CD4-positive, alpha-beta T cell (primary cell): ENCODE measurements at regions of chr12 and their contacts with region 1.

Region 1: DNA sequence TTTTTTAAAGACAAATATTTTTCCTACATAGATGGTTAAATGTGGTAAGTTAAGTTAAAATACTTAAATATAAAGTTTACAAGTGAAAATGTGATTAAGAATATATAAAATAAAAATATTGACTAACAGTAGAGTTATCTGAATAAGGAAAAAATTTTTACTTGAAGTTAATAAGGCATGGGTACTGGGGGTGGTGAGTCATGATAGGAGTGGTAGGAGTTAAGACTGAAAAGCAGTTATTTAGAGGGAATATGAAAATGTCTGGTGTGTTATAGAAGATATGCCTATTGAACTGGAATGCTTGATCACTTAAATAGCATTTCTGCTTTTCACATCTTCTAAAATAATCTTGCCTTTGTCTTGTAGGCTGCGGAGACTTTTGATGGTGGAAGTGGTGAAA is 68.7 kb downstream of the CCDC91 start:
- DNase-seq: no peak
- ATAC-seq: no peak
- H3K4me3 ChIP-seq: no peak overlapping the region
- H3K4me3 Mint-ChIP-seq: no peak overlapping the region
- H3K27ac ChIP-seq: no peak overlapping the region
- H3K27ac Mint-ChIP-seq: no peak overlapping the region
- H3K4me1 ChIP-seq: no peaks in the 10 kb centered on the region
- H3K4me1 Mint-ChIP-seq: peaks cover under 1% of the 10 kb centered on the region
- H3K27me3 ChIP-seq: no peaks in the 10 kb centered on the region
- H3K27me3 Mint-ChIP-seq: no peaks in the 10 kb centered on the region
- CTCF ChIP-seq: no peak

Region 2: DNA sequence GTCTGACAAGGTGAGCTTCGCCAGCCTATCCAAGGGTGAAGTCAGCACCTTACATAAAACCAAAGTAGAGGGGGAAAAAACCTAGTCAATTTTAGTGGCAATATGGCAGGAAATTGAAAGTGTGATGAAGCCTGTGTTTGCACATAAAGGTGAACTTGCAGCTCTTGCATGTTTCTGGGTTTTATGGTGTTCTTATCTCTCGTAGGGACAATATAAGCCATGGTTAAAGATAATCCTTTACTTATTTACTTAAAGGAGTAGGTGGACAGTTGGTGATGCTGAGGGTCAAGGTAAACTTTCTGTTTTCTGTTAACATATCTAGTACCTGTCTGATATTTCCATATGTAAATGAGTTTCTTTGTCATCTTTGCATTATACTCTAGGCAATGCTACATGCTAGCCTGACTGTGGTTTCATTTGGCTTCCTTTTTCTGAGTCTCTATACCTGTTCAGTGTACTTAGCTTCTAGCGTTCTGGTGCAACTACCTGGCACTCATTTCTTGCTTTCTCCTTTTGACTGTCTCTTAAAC is 35.9 kb before region 1 on chr12:
- CTCF ChIA-PET with region 1: no interaction called
- POLR2A ChIA-PET with region 1: no interaction called
- intact Hi-C with region 1: loop called in 1 of 2 experiments (anchors 5 kb)
- DNase-seq: peak in 3 of 14 experiments; percentile 32 to 48 (median 41)
- ATAC-seq: peak; percentile 79
- H3K4me3 ChIP-seq: no peak overlapping the region
- H3K4me3 Mint-ChIP-seq: peak overlapping the region; percentile 79
- H3K27ac ChIP-seq: no peak overlapping the region
- H3K27ac Mint-ChIP-seq: peak overlapping the region; percentile 54
- H3K4me1 ChIP-seq: peaks cover 9% of the 10 kb centered on the region
- H3K4me1 Mint-ChIP-seq: peaks cover 59% of the 10 kb centered on the region
- H3K27me3 ChIP-seq: no peaks in the 10 kb centered on the region
- H3K27me3 Mint-ChIP-seq: no peaks in the 10 kb centered on the region
- CTCF ChIP-seq: no peak